ENCODE measurements at regions of chr19 and their contacts with region 1.

Region 1: GRCh38 chr19:7349961-7350711 is 1.4 kb downstream of the ARHGEF18 start:
- DNase-seq: no peak
- ATAC-seq: no peak

Region 2: GRCh38 chr19:7674010-7675005 is 324.2 kb after region 1 on chr19:
- intact Hi-C with region 1: loop called in 1 of 2 experiments (anchors 10 kb)
- DNase-seq: peak; percentile 67
- ATAC-seq: peak; percentile 82 to 86

Region 3: GRCh38 chr19:7680606-7681339 is 330.6 kb after region 1 on chr19 and contains the start of gene TRAPPC5:
- intact Hi-C with region 1: loop called (anchors 10 kb)
- DNase-seq: peak; percentile 90
- ATAC-seq: peak; percentile 87 to 91
- total RNA-seq, gene TRAPPC5: 82.6 to 108 TPM

Measured in left cardiac atrium (tissue), 4 donors.